GM18951 (cell line): ENCODE measurements at regions of chr10 and their contacts with region 1.

Region 1: GRCh38 chr10:75399461-75400162 is 2.0 kb downstream of the ZNF503 start:
- POLR2A ChIP-seq: peak; percentile 16

Region 2: DNA sequence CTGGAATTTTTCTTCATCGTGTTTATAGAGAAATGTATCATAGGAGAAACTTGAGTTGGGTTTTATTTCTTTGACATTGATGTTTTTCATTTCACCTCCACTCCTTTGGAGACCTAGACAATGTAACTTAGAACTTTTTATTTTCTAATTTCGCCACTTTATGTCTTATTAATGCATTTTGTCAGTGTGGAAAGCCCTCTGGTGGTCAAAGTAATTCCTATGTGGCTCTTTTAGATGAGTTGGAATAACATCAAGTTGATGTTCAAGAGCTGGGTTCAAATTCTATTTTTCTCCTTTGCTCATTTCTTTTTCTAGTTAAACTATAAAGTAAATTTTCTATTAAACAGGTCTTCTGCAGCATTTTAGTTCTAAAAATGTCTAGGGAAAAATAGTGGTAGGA is 510.4 kb after region 1 on chr10:
- in situ Hi-C with region 1: loop called (anchors 25 kb)
- POLR2A ChIP-seq: no peak

Region 3: DNA sequence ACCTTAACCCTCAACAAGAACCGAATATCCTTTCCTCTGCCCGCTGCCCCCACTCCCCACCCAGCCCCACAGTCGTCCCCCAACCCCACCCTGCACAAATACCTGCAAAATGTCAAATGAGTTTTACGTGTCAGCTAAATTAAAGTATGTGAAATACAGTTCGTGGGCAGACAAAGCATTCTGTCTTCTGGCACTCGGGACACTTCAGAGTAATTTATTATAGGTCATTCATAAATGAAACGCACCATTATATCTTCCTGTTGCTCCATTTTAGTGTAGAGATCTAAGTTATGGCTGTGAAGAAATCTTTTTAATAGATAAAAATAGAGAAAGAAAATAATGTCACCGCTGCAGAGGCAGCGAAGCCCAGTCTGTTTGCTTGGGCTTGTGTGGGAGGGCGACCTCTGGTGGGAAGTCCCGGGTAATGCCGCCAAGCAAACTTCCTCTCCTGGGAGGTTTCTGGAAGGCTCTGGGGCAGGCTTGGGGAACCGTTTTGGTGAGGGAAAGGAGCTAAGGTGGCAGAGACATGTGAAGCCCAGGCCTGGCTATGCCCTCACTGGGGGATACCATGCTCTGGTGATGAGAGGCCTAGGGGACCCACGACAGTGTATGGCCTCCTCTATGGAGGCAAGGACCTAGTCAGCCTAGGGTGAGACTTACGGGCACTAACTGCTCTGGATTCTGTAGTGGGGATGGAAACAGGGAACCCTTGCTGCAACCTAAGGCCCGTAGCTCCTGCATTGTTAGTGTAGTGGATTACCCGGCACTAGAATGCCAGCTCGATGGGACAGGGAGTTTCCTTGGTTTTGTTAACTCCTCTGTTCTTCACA is 636.7 kb after region 1 on chr10:
- in situ Hi-C with region 1: loop called (anchors 25 kb)
- POLR2A ChIP-seq: no peak

Region 4: DNA sequence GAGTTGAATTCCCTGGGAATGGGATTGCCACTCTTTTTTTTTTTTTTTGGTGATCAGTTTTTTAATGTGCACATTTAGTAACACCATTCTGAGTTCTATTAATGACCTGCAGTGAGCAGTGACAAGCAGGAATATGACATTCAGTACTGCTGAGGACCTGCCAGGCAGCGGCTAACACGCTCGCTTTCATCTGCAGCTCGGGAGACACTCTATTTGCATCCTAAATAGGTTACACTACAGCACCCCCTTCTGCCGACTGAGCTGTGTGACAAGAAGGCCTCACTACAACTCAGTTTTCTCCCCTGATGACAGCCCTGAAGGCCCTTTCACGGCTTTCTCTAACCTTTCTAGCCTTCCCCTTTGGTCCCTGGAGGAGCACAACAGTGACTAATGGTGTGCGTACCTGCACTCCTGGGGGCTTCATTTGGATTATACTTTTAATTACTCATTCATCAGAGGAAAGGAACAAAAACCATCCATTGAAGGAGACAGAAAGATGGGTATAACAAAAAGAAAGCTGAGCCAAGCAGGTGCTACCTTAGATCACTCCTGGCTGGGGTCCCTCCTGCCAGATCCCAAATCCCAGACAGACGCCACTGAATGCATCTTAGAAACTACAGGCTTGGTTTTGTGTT is 904.2 kb after region 1 on chr10:
- in situ Hi-C with region 1: loop called (anchors 10 kb)
- POLR2A ChIP-seq: no peak